Heart right ventricle (tissue), 16 donors: ENCODE measurements at regions of chr3 and their contacts with region 1.

Region 1: DNA sequence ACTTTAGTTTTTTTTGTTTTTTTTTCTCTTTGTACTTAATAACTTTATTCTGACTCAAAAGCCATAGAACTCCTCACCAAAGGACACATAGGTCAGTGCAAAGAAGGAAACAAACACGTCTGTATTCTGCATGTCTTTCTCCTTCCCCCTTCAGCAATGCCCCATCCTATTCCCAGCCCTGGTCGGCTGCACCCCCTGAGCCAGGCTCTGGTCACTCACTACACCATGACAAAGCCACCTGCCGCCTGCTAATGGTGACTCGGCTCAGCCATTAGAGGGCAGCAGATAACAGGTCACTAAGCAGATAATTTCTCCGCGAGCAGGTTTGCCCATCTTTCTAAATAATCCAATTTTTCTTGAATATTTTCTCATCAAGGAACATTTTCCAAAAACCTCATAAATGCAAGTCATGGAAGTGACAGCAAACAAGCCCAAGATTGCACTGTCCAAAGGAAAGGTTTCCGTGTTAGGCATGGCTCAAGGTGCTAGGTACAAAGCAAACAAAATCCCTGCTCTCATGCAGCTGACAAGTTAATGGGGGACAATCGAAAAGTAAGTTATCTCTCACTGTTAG is 37.8 kb downstream of the TM4SF4 start:
- DNase-seq: peak; percentile 40 to 62
- ATAC-seq: peak; percentile 74 to 86 (median 80)
- H3K4me3 ChIP-seq: no peak overlapping the region
- H3K27ac ChIP-seq: no peak overlapping the region
- H3K4me1 ChIP-seq: peaks cover 0 to 29% (median 13%) of the 10 kb centered on the region in 9 donors
- H3K27me3 ChIP-seq: no peaks in the 10 kb centered on the region
- CTCF ChIP-seq: peak; percentile 71 to 91 (median 87)

Region 2: GRCh38 chr3:149547938-149548668 is 35.8 kb after region 1 on chr3:
- intact Hi-C with region 1: no loop called
- DNase-seq: no peak
- ATAC-seq: peak; percentile 50 to 93 (median 69)
- H3K4me3 ChIP-seq: peak overlapping the region in 1 of 10 donors; percentile 14
- H3K27ac ChIP-seq: peak overlapping the region in 9 of 10 donors; percentile 53 to 83 (median 68)
- H3K4me1 ChIP-seq: peaks cover 0 to 53% (median 24%) of the 10 kb centered on the region in 9 donors
- H3K27me3 ChIP-seq: no peaks in the 10 kb centered on the region
- CTCF ChIP-seq: no peak

Region 3: DNA sequence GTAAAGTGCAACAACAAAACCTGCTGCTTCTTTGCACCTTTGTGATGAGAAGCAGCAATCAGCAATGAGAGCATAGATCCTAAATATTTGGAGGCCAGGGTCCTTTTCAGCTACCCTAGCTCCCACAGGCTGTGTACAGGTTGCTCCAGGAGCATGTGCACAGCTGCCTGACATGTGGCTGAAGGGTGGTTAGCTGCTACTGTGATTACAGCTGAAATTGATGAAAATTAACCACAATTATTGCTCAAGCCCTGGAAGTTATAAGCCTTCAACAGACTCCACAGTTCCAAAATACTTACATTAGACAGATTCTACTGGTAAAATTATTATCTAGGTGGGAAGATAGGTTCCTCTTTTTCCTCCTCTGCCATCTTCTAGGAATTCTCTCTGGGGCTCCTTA is 211.5 kb after region 1 on chr3:
- intact Hi-C with region 1: loop called in 7 of 10 experiments (anchors 5 kb)
- DNase-seq: no peak
- ATAC-seq: no peak
- H3K4me3 ChIP-seq: no peak overlapping the region
- H3K27ac ChIP-seq: no peak overlapping the region
- H3K4me1 ChIP-seq: no peaks in the 10 kb centered on the region
- H3K27me3 ChIP-seq: no peaks in the 10 kb centered on the region
- CTCF ChIP-seq: no peak

Region 4: DNA sequence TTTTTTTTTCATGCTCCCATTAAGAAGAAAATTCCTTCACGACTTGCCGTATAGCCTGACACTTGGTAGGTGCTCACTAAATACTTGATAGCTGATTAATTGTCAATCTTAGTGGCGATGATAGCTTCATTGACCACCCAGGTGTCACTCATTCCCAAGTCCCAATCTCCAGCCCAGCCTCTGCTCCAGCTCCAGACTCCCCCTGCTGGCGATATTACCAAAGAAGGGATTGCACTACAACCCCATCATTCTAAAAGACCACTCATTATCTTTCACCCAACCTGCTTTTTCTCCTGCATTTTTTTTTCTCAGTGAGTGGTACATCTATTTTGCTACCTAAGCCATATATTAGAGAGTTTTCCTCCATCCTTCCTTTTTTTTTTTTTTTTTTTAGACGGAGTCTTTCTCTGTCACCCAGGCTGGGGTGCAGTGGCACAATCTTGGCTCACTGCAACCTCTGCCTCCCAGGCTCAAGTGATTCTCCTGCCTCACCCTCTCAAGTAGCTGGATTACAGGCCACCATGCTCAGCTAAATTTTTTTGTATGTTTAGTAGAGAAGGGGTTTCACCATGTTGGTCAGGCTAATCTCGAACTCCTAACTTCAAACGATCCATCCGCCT is 259.5 kb after region 1 on chr3:
- intact Hi-C with region 1: loop called in 8 of 10 experiments (anchors 5 to 10 kb)
- DNase-seq: peak; percentile 18 to 60
- ATAC-seq: peak in 4 of 8 donors; percentile 56 to 67 (median 61)
- H3K4me3 ChIP-seq: no peak overlapping the region
- H3K27ac ChIP-seq: no peak overlapping the region
- H3K4me1 ChIP-seq: no peaks in the 10 kb centered on the region
- H3K27me3 ChIP-seq: peaks cover 0 to 7% (median 0%) of the 10 kb centered on the region in 7 donors
- CTCF ChIP-seq: peak; percentile 42 to 85 (median 74)